ENCODE measurements at regions of chr11 and their contacts with region 1.

Region 1: DNA sequence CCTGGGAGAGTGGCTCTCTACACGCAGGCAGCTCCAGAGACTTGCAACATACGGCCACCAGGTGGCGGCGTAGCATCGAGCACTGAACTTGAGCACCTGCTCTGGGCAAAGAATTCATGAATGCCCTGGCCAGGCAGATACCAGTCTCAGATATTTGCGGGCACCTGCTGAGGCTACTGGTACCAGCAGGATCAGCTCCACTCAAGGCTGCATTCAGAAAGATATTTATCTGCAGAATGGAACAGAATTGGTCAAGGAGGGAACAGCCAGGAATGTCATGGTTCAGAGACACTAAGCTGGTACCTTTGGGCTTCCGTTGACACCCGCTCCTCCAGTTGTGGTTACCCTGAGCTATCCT is 10.8 kb upstream of the CCDC86 start:
- DNase-seq: peak; percentile 88
- H3K4me3 ChIP-seq: no peak overlapping the region
- H3K27ac ChIP-seq: no peak overlapping the region
- H3K4me1 ChIP-seq: no peaks in the 10 kb centered on the region
- H3K27me3 ChIP-seq: no peaks in the 10 kb centered on the region
- CTCF ChIP-seq: peak; percentile 94

Region 2: DNA sequence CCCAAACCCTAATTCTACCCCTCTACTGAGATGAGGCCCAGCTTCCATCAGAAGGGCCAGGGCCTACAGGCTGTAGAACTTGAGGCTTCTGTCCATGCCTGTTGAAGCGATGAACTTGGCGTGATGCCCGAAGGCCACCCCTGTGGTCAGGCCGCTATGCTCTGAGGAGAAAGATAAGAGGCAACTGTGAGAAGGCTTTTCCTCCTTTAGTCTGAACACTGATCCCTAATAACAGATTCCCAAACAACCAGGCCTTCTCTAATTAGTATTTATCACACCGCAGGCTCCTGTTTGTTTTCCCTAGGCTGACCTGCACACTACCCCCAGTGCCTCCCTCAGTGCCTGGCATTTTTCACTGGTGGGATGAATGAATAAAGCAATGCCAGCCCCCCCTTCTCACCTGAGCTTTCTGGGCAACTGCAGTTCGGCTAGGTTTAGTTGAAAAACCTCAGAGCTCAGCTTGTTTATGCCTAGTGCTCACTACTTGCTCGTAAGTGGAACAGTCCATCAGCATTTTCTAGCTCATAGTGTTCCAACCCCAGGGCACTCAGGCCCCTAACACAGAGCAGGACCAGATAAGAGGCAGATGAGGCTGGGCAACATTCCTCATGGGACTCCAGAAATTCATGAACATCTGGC is 60.1 kb after region 1 on chr11:
- intact Hi-C with region 1: loop called (anchors 5 kb)
- DNase-seq: no peak
- H3K4me3 ChIP-seq: no peak overlapping the region
- H3K27ac ChIP-seq: no peak overlapping the region
- H3K4me1 ChIP-seq: no peaks in the 10 kb centered on the region
- H3K27me3 ChIP-seq: no peaks in the 10 kb centered on the region
- CTCF ChIP-seq: no peak

Region 3: DNA sequence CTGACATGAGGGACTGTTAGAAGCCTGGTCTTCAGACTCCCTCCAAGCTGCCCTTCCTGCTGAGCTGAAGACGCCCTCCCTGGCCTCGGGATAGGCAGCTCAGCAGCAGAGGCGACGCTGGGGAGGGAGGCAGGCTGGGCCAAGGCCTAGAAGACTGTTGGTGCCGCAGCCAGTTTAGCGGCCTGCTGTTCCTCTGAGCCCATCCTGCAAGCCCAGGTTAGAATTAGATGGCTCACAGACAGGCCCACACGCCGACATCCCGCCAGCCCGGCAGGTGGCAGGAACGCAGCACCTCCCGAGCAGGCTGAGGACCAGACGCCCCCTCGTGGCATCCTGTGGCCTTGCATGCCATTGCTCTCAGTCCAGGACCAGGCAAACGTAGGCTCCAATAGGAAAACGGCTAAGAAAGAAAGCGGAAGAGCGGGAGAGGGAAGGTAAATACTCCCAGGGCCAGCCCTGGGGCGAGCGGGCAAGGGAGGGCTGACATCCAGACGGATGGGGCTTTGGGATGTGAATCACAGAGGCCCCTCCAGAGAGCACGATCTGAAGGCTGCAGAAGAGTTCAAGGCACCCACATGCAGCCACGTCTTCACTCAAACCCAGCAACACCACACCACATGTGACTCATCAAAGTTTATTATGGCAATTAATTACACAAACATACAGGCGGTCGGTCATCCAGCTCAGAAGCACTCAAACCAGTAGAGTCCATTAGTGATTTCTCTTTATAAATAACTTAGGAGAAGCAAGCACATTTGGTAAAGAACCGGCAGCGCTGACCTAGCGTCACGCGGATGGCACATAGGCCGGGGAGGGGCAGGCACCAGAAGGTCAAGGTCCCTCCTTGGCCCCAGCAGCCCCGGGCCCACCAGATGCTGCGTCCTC is 298.8 kb after region 1 on chr11:
- intact Hi-C with region 1: loop called (anchors 5 kb)
- DNase-seq: peak; percentile 93
- H3K4me3 ChIP-seq: peak overlapping the region; percentile 8
- H3K27ac ChIP-seq: peak overlapping the region; percentile 56
- H3K4me1 ChIP-seq: peaks cover 7% of the 10 kb centered on the region
- H3K27me3 ChIP-seq: no peaks in the 10 kb centered on the region
- CTCF ChIP-seq: peak; percentile 100

Region 4: DNA sequence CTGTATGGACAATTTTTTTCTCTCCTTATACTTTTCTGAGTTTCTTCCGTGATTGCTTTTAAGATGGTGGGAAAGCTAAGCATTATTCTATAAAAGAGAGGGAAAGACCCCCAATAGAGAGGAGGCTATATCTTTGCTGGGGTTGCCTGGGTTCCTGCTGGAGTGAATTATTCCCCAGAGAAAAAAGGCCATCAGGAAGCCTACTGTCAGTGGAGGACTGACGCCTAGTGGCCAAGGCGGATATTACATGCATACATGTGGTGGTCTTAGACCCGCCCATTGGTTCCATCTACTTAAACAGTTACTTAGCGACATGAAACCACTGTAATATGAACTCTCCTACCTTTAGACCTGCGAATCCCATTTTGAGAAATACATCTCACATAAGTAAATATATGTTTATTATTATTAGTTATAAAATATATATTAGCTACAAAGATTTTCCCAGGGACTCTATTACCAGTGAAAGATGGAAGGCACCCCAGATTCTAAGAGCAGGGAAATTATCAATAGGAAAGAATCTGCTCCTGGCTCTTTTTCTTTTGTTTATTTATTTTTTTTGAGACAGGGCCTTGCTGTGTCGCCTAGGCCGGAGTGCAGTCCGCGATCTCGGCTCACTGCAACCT is 356.5 kb after region 1 on chr11:
- intact Hi-C with region 1: loop called (anchors 10 kb)
- DNase-seq: peak; percentile 81
- H3K4me3 ChIP-seq: no peak overlapping the region
- H3K27ac ChIP-seq: no peak overlapping the region
- H3K4me1 ChIP-seq: no peaks in the 10 kb centered on the region
- H3K27me3 ChIP-seq: no peaks in the 10 kb centered on the region
- CTCF ChIP-seq: peak; percentile 93

Region 5: GRCh38 chr11:61827571-61828378 is 996.7 kb after region 1 on chr11 and contains the start of gene FADS2:
- intact Hi-C with region 1: no loop called
- DNase-seq: peak; percentile 78
- H3K4me3 ChIP-seq: peak within 1 kb of the TSS; percentile 50
- H3K27ac ChIP-seq: peak within 1 kb of the TSS; percentile 60
- H3K4me1 ChIP-seq: no peaks in the 10 kb centered on the region
- H3K27me3 ChIP-seq: peaks cover 37% of the 10 kb centered on the region
- CTCF ChIP-seq: no peak
- total RNA-seq, gene FADS2: 13.9 to 38.6 TPM

Measured in colonic mucosa (tissue), 4 donors.